Thyroid gland (tissue), 4 donors: ENCODE measurements at regions of chrX and their contacts with region 1.

Region 1: GRCh38 chrX:45515262-45516215 is 314.9 kb upstream of the DIPK2B start:
- DNase-seq: peak; percentile 47
- H3K4me3 ChIP-seq: no peak overlapping the region
- H3K27ac ChIP-seq: peak overlapping the region in 1 of 3 donors; percentile 37
- H3K4me1 ChIP-seq: peaks cover 0 to 11% of the 10 kb centered on the region in 2 donors
- H3K27me3 ChIP-seq: no peaks in the 10 kb centered on the region
- CTCF ChIP-seq: peak in 4 of 6 experiments; percentile 54 to 66 (median 60)
- POLR2A ChIP-seq: no peak

Region 2: GRCh38 chrX:45849253-45849862 is 333.8 kb after region 1 on chrX:
- intact Hi-C with region 1: loop called (anchors 10 kb)
- DNase-seq: peak in 1 of 2 donors; percentile 4
- H3K4me3 ChIP-seq: no peak overlapping the region
- H3K27ac ChIP-seq: no peak overlapping the region
- H3K4me1 ChIP-seq: no peaks in the 10 kb centered on the region
- H3K27me3 ChIP-seq: no peaks in the 10 kb centered on the region
- CTCF ChIP-seq: peak in 3 of 6 experiments; percentile 27 to 39 (median 38)
- POLR2A ChIP-seq: no peak